ENCODE measurements at regions of chr16 and their contacts with region 1.

Region 1: DNA sequence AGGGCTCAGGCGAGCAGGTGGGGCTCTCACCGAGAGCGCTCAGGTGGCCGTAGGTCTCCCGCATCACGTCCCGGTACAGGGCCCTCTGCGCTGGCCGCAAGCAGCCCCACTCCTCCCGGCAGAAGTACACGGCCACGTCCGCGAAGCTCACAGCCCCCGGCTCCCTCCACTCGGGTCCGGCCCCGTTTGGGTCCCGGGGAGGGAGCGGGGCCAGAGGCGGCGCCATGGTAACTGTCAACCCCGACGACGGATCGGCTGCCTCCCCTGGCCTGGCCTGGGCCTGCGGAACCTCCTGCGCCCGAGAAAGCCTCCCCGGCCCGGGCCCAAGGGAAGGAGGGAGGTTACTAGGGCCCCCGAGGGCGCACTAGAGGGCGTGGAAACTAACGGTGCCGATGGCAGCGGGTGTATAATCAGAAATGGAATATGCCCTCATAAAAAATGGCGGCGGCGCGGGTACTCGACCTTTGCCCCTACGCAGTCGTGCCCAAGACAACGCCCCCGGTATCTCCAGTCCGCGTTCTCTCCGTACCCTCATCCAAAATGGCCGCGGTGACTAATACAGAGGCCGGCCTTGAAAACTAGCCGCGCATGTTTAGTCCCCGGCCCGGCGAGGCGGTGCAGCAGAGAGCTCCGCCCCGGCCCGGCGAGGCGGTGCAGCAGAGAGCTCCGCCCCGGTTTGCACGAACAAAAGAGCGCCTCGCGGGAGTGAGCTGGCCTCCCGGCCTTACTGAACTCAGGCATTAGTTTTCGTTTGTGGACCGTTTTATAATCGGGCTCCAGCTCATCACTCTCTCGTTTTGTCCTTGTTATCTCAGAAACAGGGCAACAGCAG is at the start of gene ZNF764:
- DNase-seq: peak; percentile 98 to 100 (median 98)

Region 2: GRCh38 chr16:30534368-30535105 is 23.6 kb before region 1 on chr16 and contains the start of gene ZNF747:
- intact Hi-C with region 1: loop called (anchors 1 kb)
- DNase-seq: peak; percentile 89 to 99 (median 94)

Region 3: GRCh38 chr16:30571695-30572600 is 13.8 kb after region 1 on chr16 and contains the start of gene ZNF688:
- intact Hi-C with region 1: loop called (anchors 1 kb)
- DNase-seq: peak; percentile 90 to 99 (median 95)

Region 4: DNA sequence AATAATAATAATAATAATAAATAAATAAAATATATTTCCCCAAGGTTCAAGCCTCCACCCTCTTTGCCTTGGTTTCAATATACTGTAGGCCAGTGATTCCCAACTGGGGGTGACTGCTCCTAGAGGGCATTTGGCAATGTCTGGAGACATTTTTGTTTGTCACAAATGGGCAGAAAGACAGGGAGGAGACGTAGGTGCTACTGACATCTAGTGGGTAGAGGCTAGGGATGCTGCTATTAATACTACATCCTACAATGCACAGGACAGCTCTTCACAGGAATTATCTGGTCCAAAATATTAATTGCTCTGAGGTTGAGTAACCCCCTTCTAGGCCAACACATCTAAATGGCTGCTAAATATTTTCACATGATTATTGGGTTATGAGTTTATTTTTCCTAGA is 79.8 kb after region 1 on chr16:
- intact Hi-C with region 1: no loop called
- DNase-seq: peak in 1 of 10 donors; percentile 3